ENCODE measurements at regions of chr9 and their contacts with region 1.

Region 1: GRCh38 chr9:89000973-89001916 is 10.0 kb downstream of the S1PR3 start:
- DNase-seq: peak; percentile 86 to 94 (median 91)
- ATAC-seq: peak; percentile 52 to 77 (median 66)
- H3K4me3 ChIP-seq: peak overlapping the region in 4 of 12 donors; percentile 1 to 34 (median 22)
- H3K27ac ChIP-seq: peak overlapping the region in 9 of 12 donors; percentile 5 to 74 (median 45)
- H3K4me1 ChIP-seq: peaks cover 0 to 53% (median 29%) of the 10 kb centered on the region in 12 donors
- H3K27me3 ChIP-seq: no peaks in the 10 kb centered on the region
- CTCF ChIP-seq: peak; percentile 58 to 92 (median 81)
- POLR2A ChIP-seq: no peak

Region 2: DNA sequence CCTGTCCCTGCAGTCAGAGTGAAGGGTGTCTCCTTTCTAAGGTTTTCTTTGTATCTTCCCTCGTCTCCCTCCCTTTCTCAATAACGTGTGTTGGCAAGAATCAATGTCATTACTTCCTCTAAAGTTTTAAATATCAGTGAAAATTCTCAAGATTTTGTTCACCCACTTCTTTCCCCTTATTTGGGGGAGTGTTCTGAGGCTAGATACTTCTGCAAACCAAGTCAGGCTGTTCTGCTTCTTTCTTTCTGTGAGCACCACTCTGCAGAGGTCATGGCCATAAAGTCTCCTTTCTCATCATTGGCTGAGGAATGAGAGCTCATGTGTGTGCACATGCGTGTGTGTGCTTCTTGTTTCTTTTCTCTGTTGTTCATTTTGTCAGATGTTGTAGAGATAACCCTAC is 836.4 kb before region 1 on chr9:
- intact Hi-C with region 1: loop called in 1 of 10 experiments (anchors 5 kb)
- DNase-seq: no peak
- ATAC-seq: no peak
- H3K4me3 ChIP-seq: no peak overlapping the region
- H3K27ac ChIP-seq: no peak overlapping the region
- H3K4me1 ChIP-seq: no peaks in the 10 kb centered on the region
- H3K27me3 ChIP-seq: peaks cover 0 to 10% (median 0%) of the 10 kb centered on the region in 9 donors
- CTCF ChIP-seq: no peak
- POLR2A ChIP-seq: no peak

Region 3: DNA sequence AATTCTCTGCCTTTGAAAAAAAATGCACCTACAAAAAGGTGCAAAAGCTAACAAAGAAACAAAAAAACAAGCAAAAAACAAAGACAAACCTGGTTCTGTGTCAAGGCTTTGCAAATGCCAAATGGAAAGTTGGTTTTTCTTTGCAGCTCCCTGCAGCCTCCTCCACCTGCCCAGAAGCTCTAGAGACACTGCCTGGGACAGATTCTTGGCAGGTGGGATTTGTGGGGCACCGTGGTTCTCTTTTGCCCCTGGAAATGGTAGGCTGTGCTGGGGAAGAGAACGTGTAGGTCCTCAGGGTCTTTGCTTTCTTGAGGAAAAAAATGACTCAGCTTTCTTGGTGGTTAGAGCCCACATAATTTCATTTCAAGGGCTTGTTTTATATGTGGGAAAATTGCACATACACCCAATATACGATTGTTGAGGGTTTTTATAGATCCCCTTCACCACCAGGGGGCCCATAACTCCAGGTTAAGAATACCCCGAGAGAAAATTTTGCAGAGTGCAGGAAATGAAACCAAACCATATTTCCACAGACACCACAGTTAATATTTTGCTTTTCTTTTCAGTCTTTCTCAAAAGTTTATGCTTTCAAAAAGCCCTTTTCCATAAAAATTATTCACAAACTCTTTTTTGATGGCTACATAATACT is 407.6 kb before region 1 on chr9:
- intact Hi-C with region 1: loop called (anchors 1 to 2 kb)
- DNase-seq: peak in 3 of 5 donors; percentile 59 to 66 (median 62)
- ATAC-seq: peak in 3 of 4 donors; percentile 68 to 76 (median 71)
- H3K4me3 ChIP-seq: no peak overlapping the region
- H3K27ac ChIP-seq: no peak overlapping the region
- H3K4me1 ChIP-seq: peaks cover 0 to 4% (median 0%) of the 10 kb centered on the region in 12 donors
- H3K27me3 ChIP-seq: no peaks in the 10 kb centered on the region
- CTCF ChIP-seq: peak; percentile 51 to 79 (median 70)
- POLR2A ChIP-seq: no peak

Region 4: DNA sequence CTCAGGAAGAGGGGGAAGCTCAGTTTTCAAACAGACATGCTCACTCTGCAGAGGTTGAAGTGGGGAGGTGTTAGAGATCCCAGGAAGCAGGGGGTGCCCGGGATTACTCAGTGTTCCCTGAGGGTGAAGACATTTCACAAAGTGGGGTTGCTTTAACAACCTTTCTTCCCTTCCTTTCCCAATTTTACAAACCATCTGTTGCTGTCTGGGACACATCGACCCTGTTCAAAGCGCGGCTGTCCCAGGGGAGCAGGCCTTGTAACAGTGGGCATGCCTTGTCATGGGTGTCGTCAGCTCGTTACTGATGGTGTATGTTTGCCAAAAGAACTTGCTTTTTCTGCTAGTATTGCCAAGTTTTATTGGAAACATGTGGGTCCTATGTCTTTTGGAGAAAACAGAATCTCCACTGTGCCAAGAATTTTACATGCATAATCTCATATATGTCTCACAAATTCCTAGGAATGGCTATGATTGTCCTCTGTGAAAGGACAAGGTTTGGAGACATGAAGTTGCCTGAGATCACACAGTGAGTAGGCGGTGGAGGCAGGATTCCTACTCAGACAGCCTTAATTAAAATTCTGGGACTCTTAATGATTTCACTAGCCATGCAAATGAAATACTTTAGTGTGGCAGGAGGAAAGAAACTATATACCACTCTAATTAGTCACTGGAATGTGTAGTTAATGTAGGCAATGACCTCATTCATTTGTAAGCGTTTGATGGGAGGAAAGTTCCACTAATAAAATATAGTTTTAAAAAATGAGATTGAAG is 267.4 kb before region 1 on chr9:
- intact Hi-C with region 1: loop called in 4 of 10 experiments (anchors 5 to 10 kb)
- DNase-seq: peak in 2 of 5 donors; percentile 72 to 89
- ATAC-seq: peak in 2 of 4 donors; percentile 54 to 66
- H3K4me3 ChIP-seq: no peak overlapping the region
- H3K27ac ChIP-seq: peak overlapping the region in 4 of 12 donors; percentile 13 to 64 (median 63)
- H3K4me1 ChIP-seq: peaks cover 0 to 23% (median 3%) of the 10 kb centered on the region in 12 donors
- H3K27me3 ChIP-seq: no peaks in the 10 kb centered on the region
- CTCF ChIP-seq: no peak
- POLR2A ChIP-seq: no peak

Region 5: DNA sequence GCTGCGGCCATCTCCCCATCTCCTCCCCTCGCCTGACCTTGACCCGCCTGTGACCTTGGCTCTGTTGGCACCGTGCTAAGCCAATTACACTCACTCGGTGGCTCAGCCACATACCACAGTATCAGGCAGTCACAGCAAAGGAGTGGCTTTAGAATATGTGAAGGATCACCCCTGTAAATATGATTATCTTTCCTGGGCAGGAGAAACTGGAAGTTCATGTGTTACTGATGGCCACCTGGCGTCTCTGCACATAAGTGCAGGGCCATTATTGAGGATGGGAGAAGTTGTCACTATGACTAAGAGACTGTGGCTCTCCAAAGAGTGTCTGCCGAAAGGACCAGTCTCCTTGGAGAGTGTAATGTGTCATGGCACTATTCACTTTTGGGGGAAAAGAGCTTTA is 126.9 kb before region 1 on chr9:
- intact Hi-C with region 1: loop called in 3 of 10 experiments (anchors 2 to 10 kb)
- DNase-seq: peak in 1 of 5 donors; percentile 39
- ATAC-seq: peak in 3 of 4 donors; percentile 36 to 55 (median 46)
- H3K4me3 ChIP-seq: no peak overlapping the region
- H3K27ac ChIP-seq: peak overlapping the region in 5 of 12 donors; percentile 0 to 78 (median 37)
- H3K4me1 ChIP-seq: peaks cover 0 to 29% (median 11%) of the 10 kb centered on the region in 12 donors
- H3K27me3 ChIP-seq: no peaks in the 10 kb centered on the region
- CTCF ChIP-seq: peak in 8 of 12 donors; percentile 15 to 38 (median 28)
- POLR2A ChIP-seq: no peak